Heart right ventricle (tissue), 16 donors: ENCODE measurements at regions of chr18 and their contacts with region 1.

Region 1: GRCh38 chr18:11851146-11851805 is at the start of gene CHMP1B:
- DNase-seq: peak; percentile 98
- ATAC-seq: peak; percentile 98 to 100 (median 99)
- H3K4me3 ChIP-seq: peak within 1 kb of the TSS; percentile 65 to 97 (median 82)
- H3K27ac ChIP-seq: peak within 1 kb of the TSS; percentile 86 to 99 (median 93)
- H3K4me1 ChIP-seq: peaks cover 0 to 48% (median 24%) of the 10 kb centered on the region in 9 donors
- H3K27me3 ChIP-seq: no peaks in the 10 kb centered on the region
- CTCF ChIP-seq: no peak
- total RNA-seq, gene CHMP1B: 30.2 to 53.7 (median 38.3) TPM

Region 2: DNA sequence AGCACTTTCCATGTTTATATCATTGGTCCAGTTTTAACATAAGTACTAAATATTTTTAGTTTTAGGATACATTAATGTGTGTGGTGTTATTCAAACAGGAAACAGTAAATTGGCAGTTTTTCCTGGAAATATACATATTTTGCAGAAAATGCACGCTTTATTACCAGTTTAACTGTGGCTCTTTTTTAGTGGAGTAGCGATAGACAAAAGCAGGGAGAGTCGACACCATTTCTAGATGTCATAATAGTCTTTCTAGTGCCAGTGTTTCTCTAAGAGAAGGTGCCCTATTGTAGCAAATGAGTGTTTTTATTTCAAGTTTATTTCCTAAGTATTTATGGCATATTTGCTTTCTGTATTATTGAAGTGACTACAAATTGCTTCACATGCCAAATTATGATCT is 251.0 kb before region 1 on chr18:
- intact Hi-C with region 1: no loop called
- DNase-seq: no peak
- ATAC-seq: no peak
- H3K4me3 ChIP-seq: no peak overlapping the region
- H3K27ac ChIP-seq: no peak overlapping the region
- H3K4me1 ChIP-seq: no peaks in the 10 kb centered on the region
- H3K27me3 ChIP-seq: peaks cover 0 to 14% (median 0%) of the 10 kb centered on the region in 7 donors
- CTCF ChIP-seq: no peak

Region 3: GRCh38 chr18:11808001-11808855 is 43.0 kb before region 1 on chr18:
- intact Hi-C with region 1: loop called in 1 of 10 experiments (anchors 2 kb)
- DNase-seq: no peak
- ATAC-seq: no peak
- H3K4me3 ChIP-seq: no peak overlapping the region
- H3K27ac ChIP-seq: no peak overlapping the region
- H3K4me1 ChIP-seq: peaks cover 0 to 5% (median 0%) of the 10 kb centered on the region in 9 donors
- H3K27me3 ChIP-seq: no peaks in the 10 kb centered on the region
- CTCF ChIP-seq: no peak

Region 4: GRCh38 chr18:11908182-11909060 is 57.1 kb after region 1 on chr18 and contains the start of gene MPPE1:
- intact Hi-C with region 1: loop called in 7 of 10 experiments (anchors 1 to 10 kb)
- DNase-seq: peak; percentile 89 to 92
- ATAC-seq: peak; percentile 93 to 98 (median 97)
- H3K4me3 ChIP-seq: peak within 1 kb of the TSS; percentile 49 to 97 (median 86)
- H3K27ac ChIP-seq: peak within 1 kb of the TSS; percentile 92 to 100 (median 100)
- H3K4me1 ChIP-seq: peaks cover 0 to 37% (median 26%) of the 10 kb centered on the region in 9 donors
- H3K27me3 ChIP-seq: no peaks in the 10 kb centered on the region
- CTCF ChIP-seq: no peak
- total RNA-seq, gene MPPE1: 21.2 to 44.5 (median 34.1) TPM

Region 5: GRCh38 chr18:11947214-11948191 is 96.2 kb after region 1 on chr18:
- intact Hi-C with region 1: loop called in 2 of 10 experiments (anchors 2 kb)
- DNase-seq: peak; percentile 92 to 94
- ATAC-seq: peak; percentile 96 to 99 (median 98)
- H3K4me3 ChIP-seq: peak overlapping the region; percentile 23 to 75 (median 59)
- H3K27ac ChIP-seq: peak overlapping the region; percentile 76 to 99 (median 97)
- H3K4me1 ChIP-seq: peaks cover 0 to 24% (median 15%) of the 10 kb centered on the region in 9 donors
- H3K27me3 ChIP-seq: no peaks in the 10 kb centered on the region
- CTCF ChIP-seq: peak in 3 of 9 donors; percentile 6 to 15 (median 8)

Region 6: DNA sequence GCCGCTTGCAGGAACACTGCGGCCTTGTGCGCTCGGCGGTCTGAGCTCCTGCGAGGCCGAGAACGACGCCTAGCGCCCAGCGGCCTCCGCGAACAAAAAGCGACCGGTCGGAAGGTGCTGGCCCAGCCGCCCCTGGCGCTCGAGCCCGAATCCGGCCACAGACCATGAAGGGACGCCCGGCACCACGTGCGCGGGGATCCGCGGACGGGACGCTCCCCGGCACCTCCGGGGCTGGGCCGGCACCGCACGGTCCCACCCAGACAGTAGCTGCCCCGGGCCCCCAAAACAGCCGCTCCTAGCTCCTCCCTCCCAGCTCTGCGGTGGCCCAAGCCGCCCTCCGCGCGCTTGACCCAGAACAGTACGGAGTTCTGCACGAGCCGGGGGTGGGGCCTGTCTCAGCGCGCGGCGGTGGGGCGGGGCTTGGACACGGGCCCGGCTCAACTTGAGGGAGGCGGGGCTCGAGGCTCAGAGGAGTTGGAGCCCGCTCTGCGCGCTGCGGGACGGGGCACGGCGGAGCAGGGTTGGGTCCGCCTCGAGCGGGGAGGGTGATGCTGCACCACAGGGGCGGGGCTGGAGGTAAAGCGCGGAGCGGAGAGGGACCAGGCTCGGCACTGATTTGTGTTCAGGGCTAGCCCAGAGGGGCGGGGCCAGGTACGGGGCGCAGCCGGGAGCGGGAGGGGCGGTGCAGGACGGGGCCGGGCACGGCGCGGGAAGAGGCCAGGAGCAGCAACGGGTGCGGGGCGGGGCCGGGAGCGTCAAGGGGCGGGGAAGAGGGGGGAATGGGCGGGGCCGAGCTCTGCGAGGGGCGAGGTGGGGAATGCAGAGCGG is 129.5 kb after region 1 on chr18:
- intact Hi-C with region 1: loop called in 2 of 10 experiments (anchors 2 to 10 kb)
- DNase-seq: peak; percentile 96 to 99
- ATAC-seq: peak; percentile 89 to 97 (median 94)
- H3K4me3 ChIP-seq: peak overlapping the region; percentile 77 to 95 (median 88)
- H3K27ac ChIP-seq: peak overlapping the region; percentile 93 to 98 (median 96)
- H3K4me1 ChIP-seq: peaks cover 0 to 51% (median 31%) of the 10 kb centered on the region in 9 donors
- H3K27me3 ChIP-seq: no peaks in the 10 kb centered on the region
- CTCF ChIP-seq: peak in 4 of 9 donors; percentile 11 to 46 (median 44)

Region 7: DNA sequence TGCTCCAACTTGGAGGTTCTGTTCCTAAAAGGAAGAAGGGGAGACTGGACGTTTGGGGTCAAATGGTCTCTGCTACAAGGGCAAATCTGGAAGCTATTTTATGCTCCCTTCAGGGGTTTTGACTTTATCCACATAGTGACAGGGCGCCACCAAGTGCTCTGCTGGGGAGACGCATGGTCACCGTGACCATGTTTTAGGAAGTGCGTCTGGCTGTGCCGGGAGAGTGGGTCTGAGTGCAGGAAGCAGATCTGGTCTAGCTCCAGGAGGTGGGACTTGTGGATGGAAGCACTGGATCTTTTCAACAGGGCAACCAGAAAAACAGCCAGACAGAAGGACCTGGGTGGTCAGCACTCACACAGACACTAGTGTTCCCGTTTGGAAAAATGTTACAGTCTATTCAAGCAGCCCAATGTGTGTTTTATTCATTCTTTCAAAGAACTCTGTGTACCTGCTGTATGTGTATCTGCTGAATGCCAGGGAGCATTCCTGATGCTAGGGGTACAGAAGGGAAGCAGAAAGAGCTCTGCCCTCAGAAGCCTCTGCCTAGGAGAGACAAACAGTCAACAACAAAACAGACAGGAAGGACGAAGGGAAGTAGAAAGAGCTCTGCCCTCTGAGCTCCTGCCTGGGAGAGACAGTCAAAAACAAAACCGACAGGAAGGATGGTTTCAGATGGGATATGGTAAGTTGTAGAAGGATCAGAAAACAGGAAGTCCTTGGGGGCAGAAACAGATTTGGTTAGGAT is 144.3 kb after region 1 on chr18:
- intact Hi-C with region 1: loop called in 1 of 10 experiments (anchors 10 kb)
- DNase-seq: peak; percentile 76 to 80
- ATAC-seq: peak; percentile 79 to 93 (median 88)
- H3K4me3 ChIP-seq: peak overlapping the region in 2 of 10 donors; percentile 5 to 7
- H3K27ac ChIP-seq: peak overlapping the region in 9 of 10 donors; percentile 20 to 77 (median 65)
- H3K4me1 ChIP-seq: peaks cover 6 to 56% (median 28%) of the 10 kb centered on the region in 9 donors
- H3K27me3 ChIP-seq: no peaks in the 10 kb centered on the region
- CTCF ChIP-seq: peak; percentile 67 to 90 (median 85)